Caco-2 (cell line): ENCODE measurements at regions of chr2 and their contacts with region 1.

Region 1: DNA sequence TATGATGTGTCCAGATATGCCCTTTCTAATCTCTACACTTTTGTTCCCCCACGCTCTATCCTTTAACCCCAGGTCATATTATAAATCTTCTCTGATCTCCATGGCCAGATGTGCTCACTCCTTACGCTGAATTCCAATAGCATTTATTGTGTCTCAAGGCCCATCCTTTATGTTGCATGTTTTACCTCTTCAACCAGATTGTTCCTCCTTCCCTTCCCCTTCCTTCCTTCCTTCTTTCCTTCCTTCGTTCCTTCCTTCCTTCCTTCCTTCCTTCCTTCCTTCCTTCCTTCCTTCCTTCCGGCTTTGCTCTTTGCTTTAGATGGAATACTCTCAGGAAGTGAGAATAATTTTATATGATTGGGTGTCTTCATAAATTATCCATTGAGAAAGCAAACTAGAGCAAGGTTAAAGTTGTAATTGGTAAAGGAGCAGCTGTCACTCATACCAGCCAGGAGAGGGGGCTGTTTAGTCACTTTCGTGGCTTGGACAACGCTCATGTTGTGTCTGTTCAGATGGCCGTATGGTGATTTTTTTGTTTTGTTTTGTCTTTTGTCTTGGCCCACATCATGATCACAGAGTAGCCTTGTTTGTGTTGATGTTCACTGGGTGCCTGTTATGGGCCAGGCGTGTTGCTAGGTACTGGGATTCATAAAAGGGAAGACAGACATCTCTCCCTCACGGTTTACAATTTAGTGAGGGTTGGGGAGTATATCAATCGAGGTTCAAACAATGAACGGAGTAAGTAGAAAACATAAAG is 68.0 kb downstream of the DAW1 start:
- DNase-seq: peak in 1 of 2 experiments; percentile 27
- H3K4me3 ChIP-seq: no peak overlapping the region
- H3K4me3 Mint-ChIP-seq: no peak overlapping the region
- H3K27ac Mint-ChIP-seq: no peak overlapping the region
- H3K4me1 ChIP-seq: no peaks in the 10 kb centered on the region
- H3K4me1 Mint-ChIP-seq: no peaks in the 10 kb centered on the region
- H3K27me3 ChIP-seq: no peaks in the 10 kb centered on the region
- H3K27me3 Mint-ChIP-seq: no peaks in the 10 kb centered on the region
- CTCF ChIP-seq: peak; percentile 52 to 54

Region 2: GRCh38 chr2:227671170-227672060 is 268.0 kb before region 1 on chr2:
- CTCF ChIA-PET with region 1: no interaction called
- POLR2A ChIA-PET with region 1: no interaction called
- intact Hi-C with region 1: no loop called
- DNase-seq: no peak
- H3K4me3 ChIP-seq: no peak overlapping the region
- H3K4me3 Mint-ChIP-seq: no peak overlapping the region
- H3K27ac Mint-ChIP-seq: no peak overlapping the region
- H3K4me1 ChIP-seq: no peaks in the 10 kb centered on the region
- H3K4me1 Mint-ChIP-seq: no peaks in the 10 kb centered on the region
- H3K27me3 ChIP-seq: no peaks in the 10 kb centered on the region
- H3K27me3 Mint-ChIP-seq: no peaks in the 10 kb centered on the region
- CTCF ChIP-seq: no peak

Region 3: DNA sequence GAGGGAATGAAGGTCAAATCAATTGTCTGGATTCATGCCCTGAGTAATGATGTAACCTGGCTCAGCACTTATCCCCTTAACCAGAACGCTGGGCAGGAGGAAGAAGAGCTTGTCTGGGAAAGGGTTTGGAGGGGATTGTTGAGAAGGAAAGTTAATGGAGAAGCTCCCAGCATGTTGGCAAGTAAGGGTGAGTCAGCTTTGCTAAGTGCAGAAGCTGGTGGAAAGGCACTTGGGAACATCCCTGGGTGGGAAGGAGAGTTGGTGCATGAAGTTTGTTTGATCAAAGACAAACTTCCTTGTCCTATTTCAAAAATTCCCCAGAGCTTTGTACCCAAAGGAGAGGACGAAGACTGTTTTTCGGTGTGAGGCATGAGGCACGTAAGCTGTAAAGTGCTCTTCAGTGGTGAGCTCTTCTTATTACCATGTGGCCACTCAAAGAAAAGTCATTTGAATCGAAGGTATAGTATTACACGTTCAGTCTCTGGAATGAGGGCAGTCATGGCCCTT is 85.6 kb before region 1 on chr2:
- CTCF ChIA-PET with region 1: no interaction called
- POLR2A ChIA-PET with region 1: no interaction called
- intact Hi-C with region 1: no loop called
- DNase-seq: no peak
- H3K4me3 ChIP-seq: no peak overlapping the region
- H3K4me3 Mint-ChIP-seq: no peak overlapping the region
- H3K27ac Mint-ChIP-seq: no peak overlapping the region
- H3K4me1 ChIP-seq: no peaks in the 10 kb centered on the region
- H3K4me1 Mint-ChIP-seq: peaks cover under 1% of the 10 kb centered on the region
- H3K27me3 ChIP-seq: no peaks in the 10 kb centered on the region
- H3K27me3 Mint-ChIP-seq: no peaks in the 10 kb centered on the region
- CTCF ChIP-seq: no peak

Region 4: GRCh38 chr2:227871375-227871788 is 68.1 kb before region 1 on chr2 and contains the start of gene DAW1:
- CTCF ChIA-PET with region 1: no interaction called
- POLR2A ChIA-PET with region 1: no interaction called
- intact Hi-C with region 1: no loop called
- DNase-seq: peak; percentile 73 to 82
- H3K4me3 ChIP-seq: peak within 1 kb of the TSS; percentile 56
- H3K4me3 Mint-ChIP-seq: peak within 1 kb of the TSS; percentile 74
- H3K27ac Mint-ChIP-seq: peak within 1 kb of the TSS; percentile 88
- H3K4me1 ChIP-seq: peaks cover 37% of the 10 kb centered on the region
- H3K4me1 Mint-ChIP-seq: peaks cover 37% of the 10 kb centered on the region
- H3K27me3 ChIP-seq: no peaks in the 10 kb centered on the region
- H3K27me3 Mint-ChIP-seq: no peaks in the 10 kb centered on the region
- CTCF ChIP-seq: no peak
- total RNA-seq, gene DAW1: 5.4 and 6.6 TPM in 2 replicates

Region 5: GRCh38 chr2:227890495-227891079 is 48.9 kb before region 1 on chr2:
- CTCF ChIA-PET with region 1: interaction called, 3 read pairs
- POLR2A ChIA-PET with region 1: no interaction called
- intact Hi-C with region 1: loop called (anchors 1 kb)
- DNase-seq: peak in 1 of 2 experiments; percentile 41
- H3K4me3 ChIP-seq: no peak overlapping the region
- H3K4me3 Mint-ChIP-seq: no peak overlapping the region
- H3K27ac Mint-ChIP-seq: no peak overlapping the region
- H3K4me1 ChIP-seq: no peaks in the 10 kb centered on the region
- H3K4me1 Mint-ChIP-seq: no peaks in the 10 kb centered on the region
- H3K27me3 ChIP-seq: no peaks in the 10 kb centered on the region
- H3K27me3 Mint-ChIP-seq: no peaks in the 10 kb centered on the region
- CTCF ChIP-seq: peak; percentile 38 to 64

Region 6: DNA sequence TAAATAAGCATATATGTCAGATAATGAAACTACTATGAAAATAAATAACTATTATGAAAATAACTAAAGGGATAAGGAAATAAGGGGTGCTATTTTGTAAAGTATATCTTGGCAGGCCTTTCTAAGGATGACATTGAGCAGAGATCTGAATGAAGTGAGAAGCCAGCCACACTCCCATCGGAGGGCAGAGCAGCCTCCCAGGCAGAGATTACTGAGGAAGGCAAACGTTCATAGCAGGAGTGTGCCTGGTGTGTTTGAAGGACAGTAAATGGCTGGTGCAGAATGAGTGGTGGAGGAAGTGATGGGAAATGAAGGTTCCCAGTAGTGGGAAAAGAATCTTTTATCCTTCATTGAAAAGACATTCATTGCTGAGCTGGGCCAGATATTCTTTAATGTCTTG is 179.5 kb after region 1 on chr2:
- CTCF ChIA-PET with region 1: no interaction called
- POLR2A ChIA-PET with region 1: no interaction called
- intact Hi-C with region 1: no loop called
- DNase-seq: no peak
- H3K4me3 ChIP-seq: no peak overlapping the region
- H3K4me3 Mint-ChIP-seq: no peak overlapping the region
- H3K27ac Mint-ChIP-seq: no peak overlapping the region
- H3K4me1 ChIP-seq: no peaks in the 10 kb centered on the region
- H3K4me1 Mint-ChIP-seq: no peaks in the 10 kb centered on the region
- H3K27me3 ChIP-seq: no peaks in the 10 kb centered on the region
- H3K27me3 Mint-ChIP-seq: peaks cover 2% of the 10 kb centered on the region
- CTCF ChIP-seq: no peak

Region 7: GRCh38 chr2:228180181-228181097 is 241.0 kb after region 1 on chr2:
- CTCF ChIA-PET with region 1: no interaction called
- POLR2A ChIA-PET with region 1: no interaction called
- intact Hi-C with region 1: loop called (anchors 10 kb)
- DNase-seq: no peak
- H3K4me3 ChIP-seq: no peak overlapping the region
- H3K4me3 Mint-ChIP-seq: no peak overlapping the region
- H3K27ac Mint-ChIP-seq: no peak overlapping the region
- H3K4me1 ChIP-seq: no peaks in the 10 kb centered on the region
- H3K4me1 Mint-ChIP-seq: no peaks in the 10 kb centered on the region
- H3K27me3 ChIP-seq: no peaks in the 10 kb centered on the region
- H3K27me3 Mint-ChIP-seq: peaks cover 6% of the 10 kb centered on the region
- CTCF ChIP-seq: no peak